Naive thymus-derived CD4-positive, alpha-beta T cell (primary cell): ENCODE measurements at regions of chrX and their contacts with region 1.

Region 1: DNA sequence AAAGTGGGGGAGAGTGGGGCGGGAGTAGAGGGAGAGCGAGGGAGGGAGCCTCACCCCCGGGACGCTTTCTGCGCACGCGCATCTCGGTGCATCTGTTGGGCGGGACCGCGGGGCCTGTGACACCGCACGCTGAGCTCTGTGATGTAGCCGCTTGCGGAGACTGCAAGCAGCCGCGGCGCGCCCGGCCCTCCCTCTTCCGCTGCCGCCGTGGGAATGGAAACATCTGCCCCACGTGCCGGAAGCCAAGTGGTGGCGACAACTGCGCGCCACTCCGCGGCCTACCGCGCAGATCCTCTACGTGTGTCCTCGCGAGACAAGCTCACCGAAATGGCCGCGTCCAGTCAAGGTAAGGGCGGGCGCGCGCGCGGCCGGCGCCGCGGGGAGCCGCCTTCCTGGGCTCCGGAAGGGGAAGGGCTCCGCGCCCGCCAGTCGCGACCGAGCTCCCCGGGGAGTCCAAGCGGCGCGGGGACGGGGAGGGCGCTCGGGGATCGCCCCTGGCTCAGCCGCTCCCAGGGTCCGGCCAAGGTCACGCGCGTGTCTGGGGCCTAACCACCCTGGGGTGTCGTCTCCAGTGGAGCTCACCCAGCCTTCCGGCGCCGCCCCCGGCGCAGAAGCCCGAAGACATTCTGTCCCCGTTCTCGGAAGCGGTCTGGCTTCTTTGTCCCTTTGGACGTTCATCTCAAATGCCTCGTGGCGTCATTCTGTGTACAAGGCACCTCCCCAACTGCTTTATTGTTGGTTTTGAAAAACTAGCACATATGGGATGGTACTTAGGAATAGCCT is at the start of gene FUNDC2:
- DNase-seq: peak; percentile 78 to 96 (median 93)
- ATAC-seq: peak; percentile 92
- H3K4me3 ChIP-seq: peak within 1 kb of the TSS; percentile 90
- H3K4me3 Mint-ChIP-seq: peak within 1 kb of the TSS; percentile 82 to 92 (median 90)
- H3K27ac ChIP-seq: peak within 1 kb of the TSS; percentile 94
- H3K27ac Mint-ChIP-seq: peak within 1 kb of the TSS; percentile 84 to 97 (median 93)
- H3K4me1 ChIP-seq: peaks cover 4 to 12% of the 10 kb centered on the region in 2 donors
- H3K4me1 Mint-ChIP-seq: peaks cover 5 to 31% (median 27%) of the 10 kb centered on the region in 7 donors
- H3K27me3 ChIP-seq: no peaks in the 10 kb centered on the region
- H3K27me3 Mint-ChIP-seq: peaks cover 0 to 19% (median 0%) of the 10 kb centered on the region in 5 donors
- total RNA-seq, gene FUNDC2: 42.0 to 58.7 (median 50.1) TPM

Region 2: GRCh38 chrX:154762523-154763289 is 264.2 kb before region 1 on chrX and contains the start of gene DKC1:
- CTCF ChIA-PET with region 1: no interaction called
- POLR2A ChIA-PET with region 1: no interaction called
- intact Hi-C with region 1: loop called (anchors 2 kb)
- DNase-seq: peak; percentile 85 to 95 (median 93)
- ATAC-seq: peak; percentile 94
- H3K4me3 ChIP-seq: peak within 1 kb of the TSS; percentile 61
- H3K4me3 Mint-ChIP-seq: peak within 1 kb of the TSS; percentile 85 to 92 (median 90)
- H3K27ac ChIP-seq: peak within 1 kb of the TSS; percentile 72
- H3K27ac Mint-ChIP-seq: peak within 1 kb of the TSS; percentile 89 to 97 (median 92)
- H3K4me1 ChIP-seq: peaks cover 9% of the 10 kb centered on the region in 2 donors
- H3K4me1 Mint-ChIP-seq: peaks cover 0 to 24% (median 18%) of the 10 kb centered on the region in 7 donors
- H3K27me3 ChIP-seq: no peaks in the 10 kb centered on the region
- H3K27me3 Mint-ChIP-seq: no peaks in the 10 kb centered on the region
- total RNA-seq, gene DKC1: 50.5 to 75.0 (median 66.5) TPM

Region 3: GRCh38 chrX:154986826-154987576 is 39.9 kb before region 1 on chrX:
- CTCF ChIA-PET with region 1: no interaction called
- POLR2A ChIA-PET with region 1: no interaction called
- intact Hi-C with region 1: no loop called
- DNase-seq: peak in 1 of 9 donors; percentile 4
- ATAC-seq: no peak
- H3K4me3 ChIP-seq: no peak overlapping the region
- H3K4me3 Mint-ChIP-seq: no peak overlapping the region
- H3K27ac ChIP-seq: no peak overlapping the region
- H3K27ac Mint-ChIP-seq: no peak overlapping the region
- H3K4me1 ChIP-seq: no peaks in the 10 kb centered on the region
- H3K4me1 Mint-ChIP-seq: no peaks in the 10 kb centered on the region
- H3K27me3 ChIP-seq: peaks cover 0 to 3% of the 10 kb centered on the region in 2 donors
- H3K27me3 Mint-ChIP-seq: peaks cover 0 to 5% (median 0%) of the 10 kb centered on the region in 5 donors

Region 4: DNA sequence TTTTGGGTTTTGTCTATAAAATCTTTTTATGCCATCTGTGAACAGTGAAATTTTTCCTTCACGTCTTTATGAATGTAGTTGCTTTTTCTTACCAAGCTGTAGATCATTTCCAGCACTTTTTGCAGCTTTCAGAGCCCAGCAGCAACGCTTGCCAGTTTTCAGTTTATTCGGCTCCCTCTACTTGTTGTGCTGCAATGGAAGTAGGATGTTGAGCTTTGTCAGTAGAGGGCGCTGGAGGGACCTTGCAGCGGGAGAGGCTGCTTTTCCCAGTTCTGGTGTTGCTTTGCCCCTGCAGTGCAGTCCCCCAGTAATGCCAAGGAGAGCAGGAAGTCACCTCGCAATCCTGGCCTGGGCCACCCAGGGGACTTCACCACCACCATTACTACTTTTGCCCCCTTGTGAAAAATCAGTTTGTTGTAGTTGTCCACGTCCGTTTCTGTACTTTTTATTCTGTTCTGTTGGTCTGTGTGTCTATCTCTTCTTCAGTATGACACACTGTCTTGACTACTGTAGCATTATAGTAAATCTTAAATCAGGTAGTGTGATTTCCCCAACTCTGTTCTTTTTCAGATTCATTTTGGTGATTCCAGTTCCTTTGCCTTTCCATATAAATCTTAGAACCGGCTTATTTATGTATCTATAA is 22.2 kb after region 1 on chrX:
- CTCF ChIA-PET with region 1: interaction called, 3 read pairs
- POLR2A ChIA-PET with region 1: interaction called, 5 read pairs
- intact Hi-C with region 1: loop called in 1 of 2 experiments (anchors 1 kb)
- DNase-seq: peak in 7 of 9 donors; percentile 28 to 59 (median 52)
- ATAC-seq: peak; percentile 66
- H3K4me3 ChIP-seq: no peak overlapping the region
- H3K4me3 Mint-ChIP-seq: peak overlapping the region in 4 of 10 donors; percentile 4 to 31 (median 11)
- H3K27ac ChIP-seq: peak overlapping the region; percentile 48
- H3K27ac Mint-ChIP-seq: peak overlapping the region in 8 of 9 donors; percentile 41 to 91 (median 78)
- H3K4me1 ChIP-seq: no peaks in the 10 kb centered on the region
- H3K4me1 Mint-ChIP-seq: peaks cover 7 to 63% (median 42%) of the 10 kb centered on the region in 7 donors
- H3K27me3 ChIP-seq: no peaks in the 10 kb centered on the region
- H3K27me3 Mint-ChIP-seq: no peaks in the 10 kb centered on the region

Region 5: GRCh38 chrX:155188786-155189185 is 161.9 kb after region 1 on chrX:
- CTCF ChIA-PET with region 1: no interaction called
- POLR2A ChIA-PET with region 1: no interaction called
- intact Hi-C with region 1: loop called in 1 of 2 experiments (anchors 5 kb)
- DNase-seq: peak in 7 of 9 donors; percentile 43 to 75 (median 65)
- ATAC-seq: peak; percentile 99
- H3K4me3 ChIP-seq: peak overlapping the region; percentile 29
- H3K4me3 Mint-ChIP-seq: peak overlapping the region; percentile 40 to 75 (median 68)
- H3K27ac ChIP-seq: peak overlapping the region; percentile 33
- H3K27ac Mint-ChIP-seq: peak overlapping the region; percentile 56 to 92 (median 79)
- H3K4me1 ChIP-seq: peaks cover 8 to 24% of the 10 kb centered on the region in 2 donors
- H3K4me1 Mint-ChIP-seq: peaks cover 11 to 62% (median 48%) of the 10 kb centered on the region in 7 donors
- H3K27me3 ChIP-seq: no peaks in the 10 kb centered on the region
- H3K27me3 Mint-ChIP-seq: no peaks in the 10 kb centered on the region

Region 6: DNA sequence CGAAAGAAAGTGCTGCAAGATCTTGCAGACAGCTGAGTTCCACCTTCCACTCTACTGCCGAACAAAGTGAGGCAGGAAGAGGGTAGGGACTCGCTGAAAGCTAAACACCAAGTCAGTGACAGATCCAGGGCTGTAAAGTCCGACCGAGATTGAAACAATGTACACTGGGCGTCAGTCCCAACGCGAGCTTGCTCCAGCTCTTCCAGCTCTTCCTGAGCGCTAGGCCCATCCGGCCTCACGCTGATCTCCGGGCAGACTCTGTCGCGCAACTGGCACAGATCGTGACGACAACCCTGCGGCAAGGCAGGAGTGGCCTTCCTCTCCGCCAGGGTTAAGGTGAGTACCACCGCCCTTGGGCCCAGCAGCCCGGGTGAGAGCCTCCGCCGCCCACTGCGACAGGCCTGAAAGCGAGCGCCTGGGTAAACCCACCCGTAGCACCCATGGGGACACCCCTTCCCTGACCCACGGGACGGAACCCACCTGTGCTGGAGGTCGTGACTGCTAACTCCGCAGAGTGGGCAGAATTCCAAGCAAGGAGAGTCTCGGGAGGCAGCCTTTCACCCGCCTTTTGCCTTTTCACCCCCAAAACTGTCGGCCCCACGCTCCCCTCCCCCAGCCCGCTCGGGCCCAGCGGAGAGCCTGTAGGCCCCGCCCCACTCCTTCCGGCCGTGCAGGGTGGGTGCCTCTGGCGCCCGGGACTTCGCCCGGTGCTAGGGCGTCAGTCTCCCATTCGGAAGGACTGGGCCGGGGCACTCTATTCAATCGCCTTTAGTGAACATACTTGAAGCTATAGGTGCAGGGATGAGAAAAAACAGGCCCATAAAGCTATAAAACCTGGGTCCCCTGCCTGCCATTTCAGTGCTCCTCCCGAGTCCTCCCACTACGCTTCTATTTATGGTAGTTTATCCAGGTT is 585.7 kb after region 1 on chrX and contains the start of gene TMLHE:
- CTCF ChIA-PET with region 1: no interaction called
- POLR2A ChIA-PET with region 1: no interaction called
- intact Hi-C with region 1: loop called in 1 of 2 experiments (anchors 1 kb)
- DNase-seq: peak; percentile 28 to 68 (median 48)
- ATAC-seq: peak; percentile 93
- H3K4me3 ChIP-seq: peak within 1 kb of the TSS; percentile 83
- H3K4me3 Mint-ChIP-seq: peak within 1 kb of the TSS; percentile 87 to 95 (median 91)
- H3K27ac ChIP-seq: peak within 1 kb of the TSS; percentile 96
- H3K27ac Mint-ChIP-seq: peak within 1 kb of the TSS; percentile 91 to 97 (median 95)
- H3K4me1 ChIP-seq: no peaks in the 10 kb centered on the region
- H3K4me1 Mint-ChIP-seq: peaks cover 8 to 43% (median 33%) of the 10 kb centered on the region in 7 donors
- H3K27me3 ChIP-seq: no peaks in the 10 kb centered on the region
- H3K27me3 Mint-ChIP-seq: no peaks in the 10 kb centered on the region
- total RNA-seq, gene TMLHE: 11.8 to 17.7 (median 14.6) TPM